Gastrocnemius medialis (tissue), 4 donors: ENCODE measurements at regions of chr2 and their contacts with region 1.

Region 1: GRCh38 chr2:189674374-189675112 is at the start of gene ANKAR:
- DNase-seq: peak; percentile 74 to 89
- ATAC-seq: peak; percentile 88 to 90
- H3K4me3 ChIP-seq: peak within 1 kb of the TSS; percentile 63 to 83 (median 72)
- H3K27ac ChIP-seq: peak within 1 kb of the TSS; percentile 91 to 97 (median 94)
- H3K4me1 ChIP-seq: peaks cover 9 to 20% of the 10 kb centered on the region in 2 donors
- H3K27me3 ChIP-seq: no peaks in the 10 kb centered on the region
- CTCF ChIP-seq: peak; percentile 76 to 97 (median 84)
- POLR2A ChIP-seq: peak; percentile 54 to 56
- total RNA-seq, gene ANKAR: 3.4 to 13.1 (median 5.9) TPM

Region 2: DNA sequence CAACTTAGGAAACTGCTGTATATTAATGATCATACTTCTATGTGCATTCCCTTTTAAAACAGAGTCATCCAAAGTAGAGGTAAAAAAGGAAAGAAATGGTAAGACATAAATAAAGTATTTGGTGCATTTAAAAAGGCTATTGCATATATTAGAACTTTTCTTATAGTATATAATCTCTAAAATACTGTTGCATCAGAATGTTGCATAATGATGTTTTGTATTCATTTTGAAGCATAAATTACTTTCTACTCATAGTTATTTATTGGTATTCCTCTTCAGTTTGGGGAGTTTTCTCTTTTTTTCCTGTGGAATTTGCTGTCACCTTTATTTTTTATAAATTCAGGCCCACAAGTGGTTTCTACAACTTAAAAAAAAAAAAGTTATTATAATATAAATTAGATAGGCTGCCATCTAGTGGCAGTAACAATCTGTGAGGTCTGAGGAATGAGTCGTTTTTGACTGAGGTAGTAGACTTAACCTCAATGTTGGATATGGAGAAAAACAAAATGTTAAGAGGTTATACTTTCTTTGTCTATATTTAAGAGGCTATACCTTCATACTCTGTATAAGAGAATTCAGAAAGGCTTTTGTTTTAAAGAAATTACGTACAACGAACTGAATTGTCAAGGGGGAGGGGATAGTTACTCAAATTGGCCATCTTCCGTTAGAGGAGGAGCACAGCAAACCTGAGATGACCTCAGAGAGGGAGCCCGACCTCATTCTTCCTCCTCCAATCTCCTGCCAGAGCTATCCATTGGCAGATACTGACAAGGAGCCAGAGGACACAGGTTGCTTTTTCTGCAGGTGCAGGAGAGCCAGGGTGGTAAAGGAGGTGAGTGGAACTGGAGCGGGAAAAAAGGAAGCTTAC is 23.7 kb after region 1 on chr2:
- in situ Hi-C with region 1: loop called in 1 of 4 experiments (anchors 5 kb)
- intact Hi-C with region 1: loop called (anchors 1 kb)
- DNase-seq: no peak
- ATAC-seq: peak; percentile 86 to 92
- H3K4me3 ChIP-seq: no peak overlapping the region
- H3K27ac ChIP-seq: peak overlapping the region; percentile 22 to 61 (median 44)
- H3K4me1 ChIP-seq: no peaks in the 10 kb centered on the region
- H3K27me3 ChIP-seq: no peaks in the 10 kb centered on the region
- CTCF ChIP-seq: peak; percentile 47 to 76 (median 56)
- POLR2A ChIP-seq: no peak